Uterus (tissue), 4 donors: ENCODE measurements at regions of chr9 and their contacts with region 1.

Region 1: GRCh38 chr9:100426530-100427428 is at the start of gene MSANTD3:
- DNase-seq: peak; percentile 51 to 59
- H3K4me3 ChIP-seq: peak within 1 kb of the TSS; percentile 71 to 83
- H3K27ac ChIP-seq: peak within 1 kb of the TSS; percentile 93 to 97
- H3K4me1 ChIP-seq: peaks cover 9 to 10% of the 10 kb centered on the region in 2 donors
- H3K27me3 ChIP-seq: no peaks in the 10 kb centered on the region
- CTCF ChIP-seq: peak in 3 of 4 experiments; percentile 26 to 66 (median 57)
- POLR2A ChIP-seq: peak in 1 of 2 donors; percentile 26
- total RNA-seq, gene MSANTD3: 7.4 to 28.1 (median 20.2) TPM

Region 2: GRCh38 chr9:100352727-100353505 is 73.9 kb before region 1 on chr9 and contains the start of gene TEX10:
- intact Hi-C with region 1: loop called (anchors 10 kb)
- DNase-seq: peak; percentile 84 to 88
- H3K4me3 ChIP-seq: peak within 1 kb of the TSS; percentile 81 to 82
- H3K27ac ChIP-seq: peak within 1 kb of the TSS; percentile 76 to 86
- H3K4me1 ChIP-seq: peaks cover 0 to 4% of the 10 kb centered on the region in 2 donors
- H3K27me3 ChIP-seq: no peaks in the 10 kb centered on the region
- CTCF ChIP-seq: no peak
- POLR2A ChIP-seq: peak; percentile 63 to 76
- total RNA-seq, gene TEX10: 17.9 to 48.0 (median 21.2) TPM